WTC11 (cell line): ENCODE measurements at regions of chr2 and their contacts with region 1.

Region 1: DNA sequence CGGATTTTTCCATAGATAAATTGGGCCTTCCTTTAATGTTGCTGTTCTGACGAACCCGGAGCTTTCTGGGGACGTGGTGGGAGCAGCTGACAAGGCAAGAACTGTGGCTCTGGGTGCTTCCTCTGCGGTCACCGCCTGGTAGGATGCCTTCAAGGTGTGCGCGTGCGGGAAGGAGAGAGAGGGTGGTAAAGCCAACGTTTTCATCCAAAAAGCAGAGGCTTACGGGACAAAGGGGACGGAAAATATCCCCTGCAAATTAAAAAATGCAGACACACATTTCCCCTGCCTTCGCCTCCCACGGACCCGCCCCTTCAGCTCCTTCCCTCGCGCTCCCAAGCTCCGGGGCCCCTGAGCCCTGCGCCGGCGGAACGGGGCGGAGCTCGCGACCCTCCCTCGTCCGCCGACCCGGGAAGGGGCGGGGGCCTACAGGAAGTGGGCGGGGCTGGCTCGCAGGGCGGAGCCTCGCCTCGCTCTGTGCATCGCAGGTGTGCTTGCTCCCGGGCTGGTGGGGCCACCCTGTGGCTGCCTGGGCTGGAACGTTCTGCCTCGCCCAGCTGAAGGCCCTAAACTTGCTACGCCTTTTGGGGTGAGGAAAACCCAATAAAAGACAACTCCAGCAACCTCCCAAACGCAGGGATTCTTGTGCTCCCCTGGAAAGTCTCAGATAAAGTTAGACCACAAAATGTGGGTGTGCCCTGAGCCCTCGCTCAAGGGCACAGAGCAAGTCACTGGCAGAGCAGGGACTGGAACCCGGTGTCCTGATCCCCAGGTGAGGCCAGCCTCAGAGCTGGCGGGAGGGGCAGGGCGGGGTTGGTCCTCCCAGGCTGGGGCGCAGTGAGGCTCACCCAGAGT is 25.4 kb upstream of the SLC66A3 start:
- DNase-seq: peak; percentile 95
- ATAC-seq: peak; percentile 91
- H3K4me3 Mint-ChIP-seq: peak overlapping the region; percentile 61
- H3K27ac Mint-ChIP-seq: no peak overlapping the region
- H3K4me1 Mint-ChIP-seq: peaks cover 12% of the 10 kb centered on the region
- H3K27me3 Mint-ChIP-seq: peaks cover 10% of the 10 kb centered on the region
- CTCF ChIP-seq: no peak

Region 2: DNA sequence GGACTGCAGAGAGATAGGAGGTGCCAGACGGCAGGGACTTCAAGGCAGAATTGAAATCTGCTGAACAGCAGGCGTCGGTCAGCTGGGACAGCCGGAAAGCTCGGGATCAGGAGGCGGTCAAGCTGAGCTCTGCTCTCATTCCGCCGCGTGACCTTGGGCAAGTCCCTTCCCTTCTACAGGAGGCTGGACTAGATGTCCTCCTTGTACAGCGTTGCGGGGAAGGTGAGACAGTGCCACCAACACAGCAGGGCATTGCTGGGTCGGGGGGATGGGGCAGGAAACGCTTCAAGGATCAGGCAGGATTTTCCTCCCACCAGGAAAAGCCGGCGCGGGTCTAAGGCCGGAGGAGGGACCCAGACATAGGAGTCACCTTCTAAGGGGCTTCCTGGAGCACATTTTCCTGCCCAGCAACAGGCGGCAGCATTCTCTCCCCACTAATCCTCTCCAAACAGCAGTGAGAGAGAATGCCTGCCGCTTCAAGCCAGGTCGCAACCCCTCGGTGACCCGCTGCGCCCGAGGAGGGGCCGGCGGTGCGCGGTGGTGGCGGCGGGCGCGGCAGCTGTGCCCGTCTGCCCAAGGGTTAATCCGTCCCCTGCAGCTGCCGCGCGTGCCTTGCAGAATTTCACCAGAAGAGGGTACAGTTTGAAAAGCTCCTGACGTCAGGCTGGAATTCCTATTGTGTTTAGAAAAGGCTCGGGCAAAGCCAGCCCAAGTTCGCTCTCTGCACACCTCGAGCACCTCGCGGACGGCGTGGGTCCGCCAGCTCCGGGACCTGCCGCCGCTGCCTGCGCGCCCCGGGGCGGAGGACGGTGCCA is 218.4 kb before region 1 on chr2 and contains the start of gene KCNF1:
- CTCF ChIA-PET with region 1: interaction called, 49 read pairs
- POLR2A ChIA-PET with region 1: no interaction called
- DNase-seq: peak; percentile 62
- ATAC-seq: peak; percentile 49
- H3K4me3 Mint-ChIP-seq: peak within 1 kb of the TSS; percentile 68
- H3K27ac Mint-ChIP-seq: no peak within 1 kb of the TSS
- H3K4me1 Mint-ChIP-seq: peaks cover 37% of the 10 kb centered on the region
- H3K27me3 Mint-ChIP-seq: peaks cover 37% of the 10 kb centered on the region
- CTCF ChIP-seq: no peak
- total RNA-seq, gene KCNF1: 1.2 to 1.4 TPM (median 1.2 TPM) in 3 replicates

Region 3: GRCh38 chr2:11142345-11142744 is 12.5 kb after region 1 on chr2:
- CTCF ChIA-PET with region 1: interaction called, 37 read pairs
- POLR2A ChIA-PET with region 1: no interaction called
- DNase-seq: no peak
- ATAC-seq: no peak
- H3K4me3 Mint-ChIP-seq: no peak overlapping the region
- H3K27ac Mint-ChIP-seq: no peak overlapping the region
- H3K4me1 Mint-ChIP-seq: no peaks in the 10 kb centered on the region
- H3K27me3 Mint-ChIP-seq: no peaks in the 10 kb centered on the region
- CTCF ChIP-seq: no peak

Region 4: GRCh38 chr2:11320698-11321492 is 191.1 kb after region 1 on chr2:
- CTCF ChIA-PET with region 1: interaction called, 14 read pairs
- POLR2A ChIA-PET with region 1: no interaction called
- DNase-seq: no peak
- ATAC-seq: peak; percentile 79
- H3K4me3 Mint-ChIP-seq: no peak overlapping the region
- H3K27ac Mint-ChIP-seq: no peak overlapping the region
- H3K4me1 Mint-ChIP-seq: peaks cover 10% of the 10 kb centered on the region; the same call in 1 of the 2 replicates
- H3K27me3 Mint-ChIP-seq: no peaks in the 10 kb centered on the region
- CTCF ChIP-seq: no peak

Region 5: DNA sequence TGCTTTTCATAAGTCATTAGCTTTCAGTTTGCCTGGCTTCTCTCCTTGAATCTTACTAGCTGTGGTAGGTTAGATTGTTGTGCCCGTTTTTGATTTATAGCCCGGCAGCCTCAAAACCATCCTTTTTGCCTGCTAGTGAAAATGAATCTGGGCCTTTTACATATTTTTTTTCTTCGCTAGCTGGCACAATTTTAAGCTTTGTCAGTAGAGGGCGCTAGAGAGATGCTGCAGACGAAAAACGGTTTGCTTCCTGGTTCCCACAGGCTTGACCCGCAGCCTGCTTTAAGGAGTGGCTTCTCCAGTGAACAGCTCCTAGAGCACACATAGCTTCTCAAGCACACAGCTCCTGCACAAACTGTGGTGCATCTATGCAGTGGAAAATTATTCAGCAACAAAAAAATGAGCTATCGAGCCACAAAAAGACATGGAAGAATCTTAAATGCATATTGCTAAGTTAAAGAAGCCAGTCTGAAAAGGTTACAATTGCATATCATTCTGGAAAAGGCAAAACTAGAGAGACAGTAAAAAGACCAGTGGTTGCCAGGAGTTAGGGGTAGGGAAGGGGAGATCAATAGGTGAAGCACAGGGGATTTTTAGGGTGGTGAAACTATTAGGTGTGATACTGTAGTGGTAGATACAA is 288.2 kb after region 1 on chr2:
- CTCF ChIA-PET with region 1: interaction called, 91 read pairs
- POLR2A ChIA-PET with region 1: no interaction called
- DNase-seq: peak; percentile 26
- ATAC-seq: peak; percentile 24; the same call in 1 of the 2 replicates
- H3K4me3 Mint-ChIP-seq: no peak overlapping the region
- H3K27ac Mint-ChIP-seq: no peak overlapping the region; the same call in 1 of the 2 replicates
- H3K4me1 Mint-ChIP-seq: no peaks in the 10 kb centered on the region
- H3K27me3 Mint-ChIP-seq: peaks cover 3% of the 10 kb centered on the region
- CTCF ChIP-seq: peak; percentile 43; the same call in 1 of the 2 replicates

Region 6: GRCh38 chr2:11583840-11584524 is 454.2 kb after region 1 on chr2:
- CTCF ChIA-PET with region 1: interaction called, 33 read pairs
- POLR2A ChIA-PET with region 1: no interaction called
- DNase-seq: peak; percentile 78
- ATAC-seq: peak; percentile 49
- H3K4me3 Mint-ChIP-seq: no peak overlapping the region
- H3K27ac Mint-ChIP-seq: peak overlapping the region; percentile 89
- H3K4me1 Mint-ChIP-seq: peaks cover 22% of the 10 kb centered on the region
- H3K27me3 Mint-ChIP-seq: no peaks in the 10 kb centered on the region
- CTCF ChIP-seq: peak; percentile 80

Region 7: GRCh38 chr2:11669454-11670291 is 539.8 kb after region 1 on chr2 and contains the start of gene NTSR2:
- CTCF ChIA-PET with region 1: no interaction called
- POLR2A ChIA-PET with region 1: no interaction called
- DNase-seq: peak; percentile 81
- ATAC-seq: peak; percentile 95
- H3K4me3 Mint-ChIP-seq: peak within 1 kb of the TSS; percentile 52
- H3K27ac Mint-ChIP-seq: no peak within 1 kb of the TSS; the same call in 1 of the 2 replicates
- H3K4me1 Mint-ChIP-seq: peaks cover 9% of the 10 kb centered on the region
- H3K27me3 Mint-ChIP-seq: peaks cover 33% of the 10 kb centered on the region
- CTCF ChIP-seq: no peak
- total RNA-seq, gene NTSR2: 0.16 TPM in 1 of 3 replicates, not detected in the others